ENCODE measurements at regions of chr15 and their contacts with region 1.

Region 1: DNA sequence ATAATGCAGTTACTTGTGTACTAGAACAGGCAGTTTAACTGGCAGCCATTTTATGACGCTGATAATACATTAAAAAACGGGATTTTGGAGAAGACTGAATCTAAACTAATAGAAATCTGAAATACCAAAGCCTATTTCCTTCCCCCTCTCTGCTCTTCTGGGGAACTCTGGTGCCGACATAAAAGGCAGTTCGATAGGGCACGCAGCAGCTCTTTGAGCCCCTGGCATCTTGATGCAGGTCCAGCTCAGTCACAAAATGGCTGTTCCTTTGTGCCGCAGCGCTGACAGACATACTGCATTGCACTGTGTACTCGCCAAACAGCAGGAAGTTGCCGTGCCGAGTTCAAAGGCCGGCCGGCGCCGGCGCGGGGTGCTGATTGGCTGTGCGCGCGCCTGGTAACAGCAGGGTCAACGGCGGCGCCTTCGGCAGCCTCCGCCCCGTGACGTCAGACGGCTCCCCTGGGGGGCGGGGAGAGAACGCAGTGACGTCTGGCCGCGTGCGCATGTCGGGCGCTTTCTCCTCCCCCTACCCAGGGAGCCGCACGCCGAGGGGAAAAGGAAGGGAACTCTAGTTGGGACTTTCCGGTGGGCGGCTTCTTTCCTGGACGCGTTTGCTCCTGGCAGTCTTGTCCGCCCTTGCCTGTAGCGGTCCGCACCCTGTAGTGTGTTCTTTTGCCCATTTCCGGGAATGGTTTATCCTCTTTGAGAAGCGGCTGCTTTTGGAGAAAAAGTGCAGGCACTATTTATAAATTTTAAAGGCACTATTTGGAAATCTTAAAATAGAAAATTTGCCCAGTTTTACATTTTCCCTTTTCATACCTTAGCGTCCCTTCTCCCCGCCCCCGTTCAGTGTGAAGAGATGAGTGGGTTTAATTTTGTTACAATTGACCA is 4.1 kb downstream of the CHD2 start:
- DNase-seq: peak; percentile 99
- H3K4me3 ChIP-seq: peak overlapping the region; percentile 80
- H3K4me3 Mint-ChIP-seq: peak overlapping the region; percentile 90 to 100 (median 91)
- H3K27ac ChIP-seq: peak overlapping the region; percentile 97
- H3K27ac Mint-ChIP-seq: peak overlapping the region; percentile 98 to 100 (median 99)
- H3K4me1 ChIP-seq: peaks cover 54% of the 10 kb centered on the region
- H3K4me1 Mint-ChIP-seq: peaks cover 63 to 74% (median 70%) of the 10 kb centered on the region in 3 donors
- H3K27me3 ChIP-seq: no peaks in the 10 kb centered on the region
- H3K27me3 Mint-ChIP-seq: peaks cover 0 to 12% of the 10 kb centered on the region in 2 donors

Region 2: DNA sequence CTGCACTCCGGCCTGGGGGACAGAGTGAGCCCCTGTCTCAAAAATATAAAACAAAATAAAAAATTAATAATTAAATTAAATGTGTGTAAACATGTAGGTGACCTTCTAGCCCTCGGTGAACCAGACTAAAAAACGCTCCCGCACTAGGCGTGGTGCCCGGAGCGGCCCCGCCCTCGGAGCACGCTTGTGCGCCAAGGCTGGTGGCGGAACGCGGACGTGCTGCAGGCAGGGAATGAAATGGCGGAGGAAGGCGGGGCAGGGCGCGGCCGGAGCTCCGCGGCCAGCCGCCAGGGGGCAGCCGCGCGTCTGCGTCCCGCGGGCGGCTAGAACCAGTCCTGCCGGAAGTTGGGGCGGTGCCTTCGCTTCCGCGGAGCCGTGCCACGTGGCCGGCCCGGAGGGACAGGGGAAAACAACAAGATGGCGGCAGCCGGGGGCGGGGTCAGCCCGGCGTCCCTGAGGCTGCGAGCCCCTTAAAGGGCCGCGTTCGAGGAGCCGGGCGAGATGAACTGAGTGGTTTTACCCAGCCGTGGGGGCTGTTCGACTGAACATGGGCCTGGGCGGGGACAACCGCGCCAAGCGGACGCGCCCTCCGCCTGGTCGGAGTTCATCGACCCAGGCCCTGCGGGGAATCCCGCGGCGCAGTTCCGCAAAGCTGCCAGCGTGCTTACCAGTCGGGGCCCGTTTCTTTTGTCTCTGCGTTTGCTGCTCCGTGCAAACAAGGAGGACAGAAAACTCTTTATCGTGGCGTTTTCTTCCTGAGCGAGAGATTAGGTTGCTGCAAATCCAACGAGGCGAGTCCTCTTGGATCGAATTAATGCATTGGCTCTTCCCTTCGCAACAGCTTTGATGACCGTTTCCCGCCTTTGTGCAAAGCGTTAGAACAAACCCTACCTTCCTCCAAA is 95.0 kb before region 1 on chr15:
- CTCF ChIA-PET with region 1: interaction called, 32 read pairs
- POLR2A ChIA-PET with region 1: interaction called, 131 read pairs
- DNase-seq: peak; percentile 96 to 100 (median 99)
- H3K4me3 ChIP-seq: peak overlapping the region; percentile 63
- H3K4me3 Mint-ChIP-seq: peak overlapping the region; percentile 78 to 93 (median 86)
- H3K27ac ChIP-seq: peak overlapping the region; percentile 94
- H3K27ac Mint-ChIP-seq: peak overlapping the region; percentile 88 to 99 (median 98)
- H3K4me1 ChIP-seq: peaks cover 52% of the 10 kb centered on the region
- H3K4me1 Mint-ChIP-seq: peaks cover 34 to 53% (median 52%) of the 10 kb centered on the region in 3 donors
- H3K27me3 ChIP-seq: no peaks in the 10 kb centered on the region
- H3K27me3 Mint-ChIP-seq: no peaks in the 10 kb centered on the region

Region 3: DNA sequence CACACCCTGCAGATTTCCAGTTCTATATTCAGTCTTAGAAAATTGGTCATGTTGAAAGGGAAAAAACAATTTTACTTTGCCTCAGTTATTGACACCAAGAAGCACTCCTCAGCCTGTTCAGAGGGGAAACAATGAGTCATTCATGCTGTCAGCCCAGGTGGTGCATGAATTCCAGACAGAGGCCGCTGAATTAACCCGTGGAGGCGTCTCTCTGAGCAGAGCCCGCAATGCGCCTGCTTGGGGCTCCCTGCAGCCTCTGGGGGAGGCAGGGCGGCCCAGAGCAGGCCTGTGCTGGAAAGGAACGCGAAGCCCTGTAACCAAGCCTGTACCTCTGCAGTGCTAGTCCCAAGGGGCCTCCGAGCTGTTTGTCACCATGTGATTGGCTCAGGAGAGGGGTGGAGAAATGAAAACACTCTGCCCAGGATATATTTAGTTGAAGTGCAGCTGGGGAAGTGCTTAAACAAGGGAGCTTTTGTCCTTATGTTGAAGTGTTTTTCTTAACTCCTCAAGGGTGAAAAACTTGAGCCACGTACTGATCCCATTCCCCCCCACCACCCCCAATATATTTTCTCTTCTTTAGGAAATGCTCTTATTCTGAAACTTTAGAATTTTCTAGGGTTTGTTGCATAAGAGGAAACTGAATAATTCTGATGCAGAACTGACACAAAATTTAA is 72.4 kb before region 1 on chr15:
- CTCF ChIA-PET with region 1: interaction called, 5 read pairs
- POLR2A ChIA-PET with region 1: interaction called, 32 read pairs
- DNase-seq: peak; percentile 70 to 97 (median 84)
- H3K4me3 ChIP-seq: peak overlapping the region; percentile 30
- H3K4me3 Mint-ChIP-seq: peak overlapping the region; percentile 40 to 88 (median 80)
- H3K27ac ChIP-seq: peak overlapping the region; percentile 83
- H3K27ac Mint-ChIP-seq: peak overlapping the region; percentile 95 to 99 (median 97)
- H3K4me1 ChIP-seq: peaks cover 45% of the 10 kb centered on the region
- H3K4me1 Mint-ChIP-seq: peaks cover 34 to 45% (median 44%) of the 10 kb centered on the region in 3 donors
- H3K27me3 ChIP-seq: no peaks in the 10 kb centered on the region
- H3K27me3 Mint-ChIP-seq: peaks cover 0 to 2% of the 10 kb centered on the region in 2 donors

Region 4: GRCh38 chr15:92889390-92890107 is 14.6 kb before region 1 on chr15:
- CTCF ChIA-PET with region 1: interaction called, 79 read pairs
- POLR2A ChIA-PET with region 1: interaction called, 455 read pairs
- DNase-seq: no peak
- H3K4me3 ChIP-seq: no peak overlapping the region
- H3K4me3 Mint-ChIP-seq: peak overlapping the region; percentile 61 to 80 (median 68)
- H3K27ac ChIP-seq: no peak overlapping the region
- H3K27ac Mint-ChIP-seq: peak overlapping the region; percentile 56 to 87 (median 82)
- H3K4me1 ChIP-seq: peaks cover 84% of the 10 kb centered on the region
- H3K4me1 Mint-ChIP-seq: peaks cover 76 to 97% (median 93%) of the 10 kb centered on the region in 3 donors
- H3K27me3 ChIP-seq: no peaks in the 10 kb centered on the region
- H3K27me3 Mint-ChIP-seq: peaks cover 0 to 1% of the 10 kb centered on the region in 2 donors

Region 5: DNA sequence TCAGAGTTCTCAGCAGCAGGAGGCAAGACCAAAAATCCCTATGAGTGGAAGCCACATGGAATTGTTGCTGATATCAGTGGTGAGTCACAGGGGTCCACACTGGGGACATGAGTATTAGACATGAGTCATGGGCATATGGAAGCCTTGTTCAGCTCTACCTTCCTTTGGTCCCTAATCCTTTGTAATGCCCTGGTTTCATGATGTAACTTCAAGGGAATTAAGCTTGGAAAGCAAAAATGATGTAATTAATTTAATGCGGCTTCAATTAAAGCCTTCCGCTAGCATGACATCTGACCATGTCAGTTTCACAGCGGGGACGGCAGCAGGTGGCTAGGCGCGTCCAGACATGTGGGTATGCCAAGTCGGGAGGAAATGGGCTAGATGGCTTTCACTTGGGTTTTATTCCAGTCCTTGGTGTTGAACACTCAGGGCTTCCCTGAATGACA is 360.9 kb after region 1 on chr15:
- CTCF ChIA-PET with region 1: no interaction called
- POLR2A ChIA-PET with region 1: no interaction called
- DNase-seq: no peak
- H3K4me3 ChIP-seq: no peak overlapping the region
- H3K4me3 Mint-ChIP-seq: no peak overlapping the region
- H3K27ac ChIP-seq: no peak overlapping the region
- H3K27ac Mint-ChIP-seq: no peak overlapping the region
- H3K4me1 ChIP-seq: no peaks in the 10 kb centered on the region
- H3K4me1 Mint-ChIP-seq: peaks cover 0 to 3% (median 0%) of the 10 kb centered on the region in 3 donors
- H3K27me3 ChIP-seq: no peaks in the 10 kb centered on the region
- H3K27me3 Mint-ChIP-seq: peaks cover 4 to 20% of the 10 kb centered on the region in 2 donors

Region 6: DNA sequence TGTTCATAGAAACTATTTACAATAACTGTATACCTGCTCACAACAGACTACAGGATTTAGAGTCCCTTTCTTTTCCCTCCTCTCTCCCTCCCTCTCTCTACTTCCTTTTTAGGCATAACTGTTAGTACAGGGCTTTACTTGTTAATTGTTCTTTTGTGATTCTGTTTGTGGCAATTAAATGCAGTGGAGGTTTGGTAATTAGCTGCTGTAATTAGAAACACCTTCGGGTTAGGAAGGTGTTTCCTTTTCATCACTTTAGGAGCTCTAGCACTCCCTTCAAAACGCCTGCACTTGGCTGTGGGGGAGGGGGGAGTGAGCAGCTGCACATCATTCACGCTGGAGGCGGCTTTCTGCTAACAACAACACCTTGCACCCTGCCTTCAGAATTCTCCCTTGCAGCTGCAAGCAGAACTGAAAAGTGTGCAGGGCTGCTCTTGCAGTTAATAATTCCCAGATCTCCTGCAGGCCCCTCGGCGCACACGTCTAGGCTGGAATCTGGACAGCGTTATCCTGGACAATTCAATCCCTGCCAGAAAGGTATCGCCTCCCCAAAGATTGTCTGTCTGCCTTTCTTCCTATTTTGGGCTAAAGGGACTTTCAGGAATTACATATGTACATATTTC is 427.5 kb after region 1 on chr15:
- CTCF ChIA-PET with region 1: no interaction called
- POLR2A ChIA-PET with region 1: no interaction called
- DNase-seq: no peak
- H3K4me3 ChIP-seq: no peak overlapping the region
- H3K4me3 Mint-ChIP-seq: no peak overlapping the region
- H3K27ac ChIP-seq: no peak overlapping the region
- H3K27ac Mint-ChIP-seq: no peak overlapping the region
- H3K4me1 ChIP-seq: no peaks in the 10 kb centered on the region
- H3K4me1 Mint-ChIP-seq: peaks cover 1 to 11% (median 4%) of the 10 kb centered on the region in 3 donors
- H3K27me3 ChIP-seq: peaks cover 3% of the 10 kb centered on the region
- H3K27me3 Mint-ChIP-seq: peaks cover 33 to 75% of the 10 kb centered on the region in 2 donors